MCF 10A (cell line): ENCODE measurements at regions of chr1 and their contacts with region 1.

Region 1: GRCh38 chr1:232630047-232630893 is at the start of gene SIPA1L2:
- DNase-seq: peak; percentile 97
- H3K4me3 Mint-ChIP-seq: peak within 1 kb of the TSS; percentile 97
- H3K27ac Mint-ChIP-seq: peak within 1 kb of the TSS; percentile 76
- H3K4me1 Mint-ChIP-seq: peaks cover 33% of the 10 kb centered on the region
- H3K27me3 Mint-ChIP-seq: no peaks in the 10 kb centered on the region
- CTCF ChIP-seq: peak; percentile 72
- total RNA-seq, gene SIPA1L2: 15.2 and 18.3 TPM in 2 replicates

Region 2: DNA sequence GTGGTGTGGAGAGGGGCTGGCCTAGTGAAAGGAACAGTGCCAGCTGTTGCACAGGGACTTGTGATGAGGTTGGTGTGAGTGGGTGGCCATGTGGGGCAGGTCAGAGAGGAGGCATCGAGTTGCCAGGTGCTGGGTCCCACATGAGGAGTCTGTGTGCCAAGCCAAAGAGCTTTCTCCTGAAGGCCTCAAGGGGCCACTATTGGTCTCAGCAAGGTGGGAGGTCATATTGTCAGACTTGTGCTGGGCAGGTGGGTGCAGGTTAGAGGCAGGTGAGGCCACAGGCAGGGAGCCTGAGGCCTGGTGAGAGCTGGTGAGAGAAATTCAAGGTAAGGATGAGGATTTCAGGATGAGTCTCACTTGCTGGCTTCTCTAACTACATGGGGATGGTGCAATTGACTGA is 746.9 kb before region 1 on chr1:
- CTCF ChIA-PET with region 1: interaction called, 10 read pairs
- POLR2A ChIA-PET with region 1: no interaction called
- intact Hi-C with region 1: loop called (anchors 5 kb)
- DNase-seq: peak; percentile 52
- H3K4me3 Mint-ChIP-seq: no peak overlapping the region
- H3K27ac Mint-ChIP-seq: no peak overlapping the region
- H3K4me1 Mint-ChIP-seq: no peaks in the 10 kb centered on the region
- H3K27me3 Mint-ChIP-seq: no peaks in the 10 kb centered on the region
- CTCF ChIP-seq: peak; percentile 15

Region 3: GRCh38 chr1:232306269-232306961 is 323.9 kb before region 1 on chr1:
- CTCF ChIA-PET with region 1: no interaction called
- POLR2A ChIA-PET with region 1: no interaction called
- intact Hi-C with region 1: loop called (anchors 10 kb)
- DNase-seq: peak; percentile 42
- H3K4me3 Mint-ChIP-seq: no peak overlapping the region
- H3K27ac Mint-ChIP-seq: no peak overlapping the region
- H3K4me1 Mint-ChIP-seq: peaks cover 16% of the 10 kb centered on the region
- H3K27me3 Mint-ChIP-seq: no peaks in the 10 kb centered on the region
- CTCF ChIP-seq: peak; percentile 17

Region 4: GRCh38 chr1:232519186-232519585 is 111.1 kb before region 1 on chr1:
- CTCF ChIA-PET with region 1: interaction called, 32 read pairs
- POLR2A ChIA-PET with region 1: interaction called, 6 read pairs
- intact Hi-C with region 1: no loop called
- DNase-seq: no peak
- H3K4me3 Mint-ChIP-seq: no peak overlapping the region
- H3K27ac Mint-ChIP-seq: no peak overlapping the region
- H3K4me1 Mint-ChIP-seq: peaks cover 18% of the 10 kb centered on the region
- H3K27me3 Mint-ChIP-seq: no peaks in the 10 kb centered on the region
- CTCF ChIP-seq: no peak

Region 5: DNA sequence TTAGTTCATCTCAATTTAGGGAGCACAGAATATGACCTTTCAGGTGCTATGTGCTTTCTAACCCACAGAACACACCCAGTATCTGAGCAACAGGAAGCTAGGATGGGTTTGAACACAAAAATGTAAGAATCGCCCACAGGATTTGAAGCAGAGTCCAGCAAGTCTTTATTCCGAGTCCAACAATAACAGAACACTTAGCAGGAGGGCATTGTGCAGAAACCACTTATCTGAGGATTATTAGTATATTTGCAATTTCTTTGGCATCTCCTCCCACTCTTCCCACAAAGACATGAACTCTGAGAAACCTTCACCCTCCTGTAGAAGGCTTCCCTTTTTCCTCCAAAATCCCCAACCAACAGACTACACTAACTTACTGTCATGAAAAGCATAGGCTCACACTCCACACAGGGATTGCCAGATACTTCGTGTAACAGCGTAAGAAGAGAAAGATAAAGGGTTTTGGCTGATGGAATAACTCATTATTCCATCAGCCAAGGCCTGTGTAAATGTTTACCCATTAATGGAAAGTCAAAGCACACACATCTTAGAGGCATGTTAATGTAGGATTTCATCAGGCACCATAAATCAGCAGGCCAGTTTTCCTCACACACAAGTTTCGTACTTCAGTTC is 16.4 kb before region 1 on chr1:
- CTCF ChIA-PET with region 1: interaction called, 36 read pairs
- POLR2A ChIA-PET with region 1: interaction called, 8 read pairs
- intact Hi-C with region 1: no loop called
- DNase-seq: peak; percentile 97
- H3K4me3 Mint-ChIP-seq: no peak overlapping the region
- H3K27ac Mint-ChIP-seq: peak overlapping the region; percentile 15
- H3K4me1 Mint-ChIP-seq: peaks cover 31% of the 10 kb centered on the region
- H3K27me3 Mint-ChIP-seq: no peaks in the 10 kb centered on the region
- CTCF ChIP-seq: no peak

Region 6: GRCh38 chr1:233025157-233025915 is 395.1 kb after region 1 on chr1:
- CTCF ChIA-PET with region 1: interaction called, 8 read pairs
- POLR2A ChIA-PET with region 1: no interaction called
- intact Hi-C with region 1: loop called (anchors 1 kb)
- DNase-seq: peak; percentile 46
- H3K4me3 Mint-ChIP-seq: no peak overlapping the region
- H3K27ac Mint-ChIP-seq: no peak overlapping the region
- H3K4me1 Mint-ChIP-seq: no peaks in the 10 kb centered on the region
- H3K27me3 Mint-ChIP-seq: no peaks in the 10 kb centered on the region
- CTCF ChIP-seq: peak; percentile 27